GM18951 (cell line): ENCODE measurements at regions of chr4 and their contacts with region 1.

Region 1: DNA sequence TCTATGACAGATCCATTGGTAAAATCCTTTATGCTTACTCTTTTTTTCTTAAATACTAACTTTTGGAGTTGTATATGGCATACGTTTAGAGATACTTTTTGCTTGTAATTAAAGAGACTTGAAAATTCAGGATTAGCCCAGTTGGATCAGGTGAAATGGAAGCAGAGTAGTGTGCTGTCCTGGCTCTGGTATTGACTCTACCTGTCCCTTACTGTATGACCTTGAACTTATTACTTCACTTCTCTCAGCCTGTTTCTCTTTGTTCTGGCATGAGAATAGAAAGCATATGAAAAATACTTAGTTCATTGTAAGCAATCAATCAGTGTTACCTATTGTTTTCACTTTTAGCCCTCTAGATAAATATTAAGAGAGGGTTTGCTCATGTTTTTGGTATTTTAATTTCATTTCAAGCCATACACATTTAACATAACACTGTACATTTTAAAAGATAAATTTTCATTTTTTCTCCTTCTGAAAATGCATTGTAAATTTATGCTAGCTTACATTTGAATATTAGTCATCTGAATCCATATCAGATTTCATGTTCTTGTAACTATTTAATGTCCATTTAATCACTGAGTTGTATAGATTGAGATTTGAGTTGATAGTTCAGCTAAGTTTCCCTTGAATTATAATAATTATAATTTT is 35.9 kb downstream of the GUCY1B1 start:
- POLR2A ChIP-seq: no peak

Region 2: GRCh38 chr4:155442267-155443105 is 352.2 kb before region 1 on chr4:
- in situ Hi-C with region 1: loop called (anchors 5 kb)
- POLR2A ChIP-seq: no peak

Region 3: DNA sequence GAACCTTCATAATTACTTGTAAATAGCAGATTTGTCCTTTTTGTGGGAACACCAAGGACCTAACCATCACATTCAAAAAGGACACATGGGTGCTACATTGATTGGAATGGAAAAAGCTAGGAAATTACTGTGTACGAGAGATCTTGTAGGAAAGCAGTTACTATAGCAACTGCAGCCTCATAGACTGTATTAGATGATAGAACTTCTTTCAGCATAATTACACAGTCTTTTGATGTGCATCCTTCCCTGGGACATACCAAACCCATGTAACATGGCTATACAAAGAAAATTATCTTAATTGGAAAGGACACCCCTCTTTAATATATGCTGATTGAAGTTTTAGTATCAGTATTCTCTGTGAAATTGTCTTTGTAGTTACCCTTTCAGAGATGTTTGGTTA is 289.7 kb after region 1 on chr4:
- in situ Hi-C with region 1: no loop called
- POLR2A ChIP-seq: no peak